ENCODE measurements at regions of chr21 and their contacts with region 1.

Region 1: GRCh38 chr21:27561116-27561515 is 594.2 kb upstream of the ADAMTS5 start:
- DNase-seq: no peak
- H3K4me3 ChIP-seq: no peak overlapping the region
- H3K27me3 ChIP-seq: no peaks in the 10 kb centered on the region
- CTCF ChIP-seq: no peak

Region 2: DNA sequence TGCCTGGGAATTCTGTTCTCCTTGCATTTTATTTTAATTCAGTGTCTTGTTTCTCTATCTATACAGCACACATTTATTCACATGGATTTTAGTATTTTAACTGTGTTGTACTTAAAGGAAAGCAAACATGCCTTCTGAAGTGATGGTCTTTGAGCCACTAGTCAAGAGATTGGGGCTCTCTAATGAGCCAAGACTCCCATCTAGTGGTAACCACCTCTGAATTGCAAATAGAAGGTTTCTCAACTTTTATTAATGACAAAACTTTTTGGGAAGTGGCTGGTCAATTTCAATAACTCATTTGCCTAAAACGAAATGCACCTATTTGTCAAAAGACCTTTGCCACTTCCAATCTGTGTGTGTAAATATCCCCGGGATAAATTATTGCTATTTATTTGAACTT is 1231.9 kb after region 1 on chr21:
- CTCF ChIA-PET with region 1: no interaction called
- POLR2A ChIA-PET with region 1: interaction called, 12 read pairs
- DNase-seq: no peak
- H3K4me3 ChIP-seq: no peak overlapping the region
- H3K27me3 ChIP-seq: no peaks in the 10 kb centered on the region
- CTCF ChIP-seq: peak; percentile 59